A673 (cell line): ENCODE measurements at regions of chr4 and their contacts with region 1.

Region 1: GRCh38 chr4:53929955-53930798 is 134.2 kb downstream of the CHIC2 start:
- DNase-seq: peak; percentile 64
- H3K4me3 ChIP-seq: no peak overlapping the region
- H3K27ac ChIP-seq: no peak overlapping the region
- H3K4me1 ChIP-seq: no peaks in the 10 kb centered on the region
- H3K27me3 ChIP-seq: peaks cover 7% of the 10 kb centered on the region
- CTCF ChIP-seq: peak; percentile 67

Region 2: GRCh38 chr4:54217642-54218495 is 287.7 kb after region 1 on chr4:
- CTCF ChIA-PET with region 1: interaction called, 5 read pairs
- POLR2A ChIA-PET with region 1: no interaction called
- intact Hi-C with region 1: loop called (anchors 5 kb)
- DNase-seq: peak; percentile 67
- H3K4me3 ChIP-seq: no peak overlapping the region
- H3K27ac ChIP-seq: no peak overlapping the region
- H3K4me1 ChIP-seq: no peaks in the 10 kb centered on the region
- H3K27me3 ChIP-seq: peaks cover 16% of the 10 kb centered on the region
- CTCF ChIP-seq: peak; percentile 68